Activated B cell treated with CpG ODN at 0.5 μM for 24 hours (primary cell): ENCODE measurements at regions of chr16 and their contacts with region 1.

Region 1: DNA sequence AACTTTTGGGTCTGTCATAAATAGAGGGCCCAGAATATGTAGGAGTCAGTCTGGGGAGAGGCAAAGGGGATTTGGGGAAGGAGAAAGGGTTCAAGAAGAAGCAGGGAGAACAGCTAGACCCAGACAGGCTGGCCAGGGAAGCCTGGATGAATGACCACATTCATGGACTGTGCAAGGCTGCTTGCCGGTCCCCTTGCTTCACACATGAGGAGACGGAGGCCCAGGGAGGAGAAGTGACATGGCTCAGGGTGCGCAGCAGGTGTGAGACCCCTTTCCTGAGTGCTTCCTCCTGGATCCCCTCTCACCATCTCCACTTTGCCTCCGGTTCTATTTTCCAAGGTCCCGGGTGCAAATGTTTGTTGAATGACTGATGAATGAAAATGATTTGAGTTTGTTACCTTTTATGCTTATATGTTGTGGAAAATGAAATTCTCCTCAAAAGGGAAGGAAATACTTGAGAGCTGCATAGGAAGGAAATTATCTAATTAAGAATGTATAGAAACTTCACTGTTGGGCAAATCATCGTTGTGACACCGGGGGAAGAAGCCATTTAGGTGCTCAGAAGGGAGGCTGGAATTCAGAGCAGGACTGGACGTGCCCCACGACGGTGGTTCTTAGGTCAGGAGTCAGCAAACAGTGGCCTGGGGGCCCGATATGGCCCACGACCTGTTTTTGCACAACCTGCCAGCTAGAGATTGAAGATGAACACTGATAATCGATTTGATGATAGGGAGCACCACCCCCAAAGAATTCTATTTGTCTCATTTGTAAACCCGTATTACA is 552 bp downstream of the ITGAM start:
- DNase-seq: no peak
- ATAC-seq: no peak
- H3K4me3 Mint-ChIP-seq: peak overlapping the region; percentile 85
- H3K27ac Mint-ChIP-seq: peak overlapping the region; percentile 82
- H3K4me1 Mint-ChIP-seq: peaks cover 60% of the 10 kb centered on the region
- H3K27me3 Mint-ChIP-seq: no peaks in the 10 kb centered on the region
- CTCF ChIP-seq: no peak

Region 2: GRCh38 chr16:30844671-30845449 is 415.5 kb before region 1 on chr16:
- CTCF ChIA-PET with region 1: no interaction called
- POLR2A ChIA-PET with region 1: no interaction called
- intact Hi-C with region 1: no loop called
- DNase-seq: peak; percentile 31
- ATAC-seq: peak; percentile 93
- H3K4me3 Mint-ChIP-seq: peak overlapping the region; percentile 65
- H3K27ac Mint-ChIP-seq: peak overlapping the region; percentile 77
- H3K4me1 Mint-ChIP-seq: peaks cover 11% of the 10 kb centered on the region
- H3K27me3 Mint-ChIP-seq: no peaks in the 10 kb centered on the region
- CTCF ChIP-seq: peak; percentile 71

Region 3: GRCh38 chr16:31215287-31216162 is 44.8 kb before region 1 on chr16:
- CTCF ChIA-PET with region 1: no interaction called
- POLR2A ChIA-PET with region 1: interaction called, 5 read pairs
- intact Hi-C with region 1: loop called (anchors 5 kb)
- DNase-seq: peak; percentile 37
- ATAC-seq: peak; percentile 63
- H3K4me3 Mint-ChIP-seq: peak overlapping the region; percentile 83
- H3K27ac Mint-ChIP-seq: no peak overlapping the region
- H3K4me1 Mint-ChIP-seq: peaks cover 48% of the 10 kb centered on the region
- H3K27me3 Mint-ChIP-seq: peaks cover 19% of the 10 kb centered on the region
- CTCF ChIP-seq: no peak

Region 4: DNA sequence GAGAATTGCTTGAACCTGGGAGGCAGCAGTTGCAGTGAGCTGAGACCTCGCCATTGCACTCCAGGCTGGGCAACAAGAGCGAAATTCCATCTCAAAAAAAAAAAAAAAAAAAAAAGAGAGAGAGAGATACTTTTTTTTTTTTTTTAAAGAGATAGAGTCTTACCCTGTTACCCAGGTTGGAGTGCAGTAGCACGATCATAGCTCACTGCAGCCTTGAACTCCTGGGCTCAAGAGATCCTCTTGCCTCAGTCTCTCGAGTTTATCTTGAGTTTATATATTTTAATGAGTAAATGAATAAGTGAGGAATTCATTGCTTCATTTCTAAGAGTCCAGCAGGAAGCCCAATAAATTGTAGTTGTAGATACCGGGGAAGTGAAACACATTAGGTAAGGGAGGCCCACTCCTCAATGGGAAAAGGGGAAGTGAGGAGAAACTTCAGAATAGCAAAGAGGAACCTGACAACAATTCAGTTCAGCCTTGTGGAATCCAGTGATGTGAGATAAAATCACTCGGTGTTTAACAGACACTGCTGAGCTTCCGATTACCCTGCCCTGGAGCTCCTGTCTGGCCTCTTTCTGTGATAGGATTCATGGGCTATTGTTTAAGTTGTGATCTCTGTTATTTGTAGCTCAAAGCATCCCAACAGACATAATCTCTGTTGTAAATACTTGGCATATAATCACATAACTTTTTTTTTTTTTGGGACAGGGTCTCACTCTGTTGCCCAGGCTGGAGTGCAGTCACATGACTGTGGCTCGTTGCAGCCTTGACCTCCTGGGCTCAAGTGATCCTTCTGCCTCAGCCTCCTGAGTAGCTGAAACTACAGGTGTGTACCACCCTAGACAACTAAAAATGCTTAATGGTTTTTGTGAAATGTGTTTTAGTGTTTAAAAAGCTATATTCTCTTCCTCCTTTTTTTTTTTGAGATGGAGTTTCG is 16.3 kb before region 1 on chr16:
- CTCF ChIA-PET with region 1: no interaction called
- POLR2A ChIA-PET with region 1: interaction called, 10 read pairs
- intact Hi-C with region 1: loop called (anchors 1 kb)
- DNase-seq: no peak
- ATAC-seq: peak; percentile 89
- H3K4me3 Mint-ChIP-seq: peak overlapping the region; percentile 1
- H3K27ac Mint-ChIP-seq: peak overlapping the region; percentile 3
- H3K4me1 Mint-ChIP-seq: peaks cover 16% of the 10 kb centered on the region
- H3K27me3 Mint-ChIP-seq: no peaks in the 10 kb centered on the region
- CTCF ChIP-seq: no peak

Region 5: DNA sequence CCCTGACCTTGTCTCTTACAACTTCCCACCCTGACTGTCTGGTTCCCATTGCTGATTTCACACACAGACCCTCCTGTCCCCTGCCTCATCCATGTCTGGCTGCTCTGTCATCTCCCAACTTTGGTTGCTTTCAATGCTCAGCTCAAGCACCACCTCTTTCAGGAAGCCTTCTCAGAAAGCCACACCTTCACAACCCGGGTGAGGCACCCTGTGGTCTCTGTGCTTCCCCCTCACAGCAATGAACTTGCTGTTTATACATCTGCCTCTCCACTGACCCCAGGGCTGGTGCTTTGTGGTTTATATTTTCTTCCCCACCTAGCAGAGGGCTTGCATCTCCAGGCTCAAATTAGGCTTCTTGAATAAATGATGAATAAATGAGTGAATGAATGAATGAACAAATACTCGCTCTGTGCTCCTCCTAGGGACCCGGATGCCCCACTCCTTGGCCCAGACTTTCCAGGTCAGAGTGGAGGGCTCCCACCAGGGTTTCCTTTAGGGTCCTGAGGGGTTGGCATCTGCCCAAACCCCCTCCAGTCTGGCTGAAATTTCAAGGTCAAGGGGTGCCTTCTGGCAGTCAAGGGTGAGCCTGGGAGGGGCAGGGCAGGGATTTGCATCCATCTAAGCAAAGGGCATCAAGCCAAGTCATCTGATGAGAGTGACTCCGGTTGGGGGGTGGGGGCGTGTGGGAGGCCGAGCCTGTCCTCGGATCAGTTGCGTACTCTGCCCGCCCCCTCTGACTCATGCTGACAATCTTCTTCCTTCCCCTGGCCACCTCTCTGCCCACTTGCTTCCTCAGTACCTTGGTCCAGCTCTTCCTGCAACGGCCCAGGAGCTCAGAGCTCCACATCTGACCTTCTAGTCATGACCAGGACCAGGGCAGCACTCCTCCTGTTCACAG is 94.3 kb after region 1 on chr16 and contains the start of gene ITGAX:
- CTCF ChIA-PET with region 1: no interaction called
- POLR2A ChIA-PET with region 1: interaction called, 5 read pairs
- intact Hi-C with region 1: loop called (anchors 5 kb)
- DNase-seq: peak; percentile 42
- ATAC-seq: peak; percentile 72
- H3K4me3 Mint-ChIP-seq: peak within 1 kb of the TSS; percentile 78
- H3K27ac Mint-ChIP-seq: peak within 1 kb of the TSS; percentile 93
- H3K4me1 Mint-ChIP-seq: peaks cover 74% of the 10 kb centered on the region
- H3K27me3 Mint-ChIP-seq: no peaks in the 10 kb centered on the region
- CTCF ChIP-seq: no peak
- total RNA-seq, gene ITGAX: 81.9 and 100 TPM in 2 replicates

Region 6: DNA sequence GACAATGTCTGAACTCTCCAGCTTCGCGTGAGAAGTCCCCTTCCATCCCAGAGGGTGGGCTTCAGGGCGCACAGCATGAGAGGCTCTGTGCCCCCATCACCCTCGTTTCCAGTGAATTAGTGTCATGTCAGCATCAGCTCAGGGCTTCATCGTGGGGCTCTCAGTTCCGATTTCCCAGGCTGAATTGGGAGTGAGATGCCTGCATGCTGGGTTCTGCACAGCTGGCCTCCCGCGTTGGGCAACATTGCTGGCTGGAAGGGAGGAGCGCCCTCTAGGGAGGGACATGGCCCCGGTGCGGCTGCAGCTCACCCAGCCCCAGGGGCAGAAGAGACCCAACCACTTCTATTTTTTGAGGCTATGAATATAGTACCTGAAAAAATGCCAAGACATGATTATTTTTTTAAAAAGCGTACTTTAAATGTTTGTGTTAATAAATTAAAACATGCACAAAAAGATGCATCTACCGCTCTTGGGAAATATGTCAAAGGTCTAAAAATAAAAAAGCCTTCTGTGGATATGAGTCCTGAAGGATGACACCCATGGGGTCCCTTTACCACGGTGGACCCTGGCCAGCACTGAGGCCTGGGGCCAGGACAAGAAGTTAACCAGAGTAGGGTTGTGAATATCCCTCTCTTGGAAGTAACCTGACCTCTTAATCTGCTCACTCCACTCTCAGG is 122.3 kb after region 1 on chr16:
- CTCF ChIA-PET with region 1: interaction called, 4 read pairs
- POLR2A ChIA-PET with region 1: interaction called, 12 read pairs
- intact Hi-C with region 1: no loop called
- DNase-seq: peak; percentile 50
- ATAC-seq: peak; percentile 86
- H3K4me3 Mint-ChIP-seq: no peak overlapping the region
- H3K27ac Mint-ChIP-seq: no peak overlapping the region
- H3K4me1 Mint-ChIP-seq: peaks cover 11% of the 10 kb centered on the region
- H3K27me3 Mint-ChIP-seq: peaks cover 2% of the 10 kb centered on the region
- CTCF ChIP-seq: no peak